Activated CD4-positive, alpha-beta memory T cell treated with anti-CD3 and anti-CD28 coated beads for 36 hours (primary cell): ENCODE measurements at regions of chr20 and their contacts with region 1.

Region 1: GRCh38 chr20:59207742-59208357 is 44.2 kb downstream of the ZNF831 start:
- DNase-seq: peak; percentile 86
- H3K4me3 Mint-ChIP-seq: no peak overlapping the region
- H3K27ac Mint-ChIP-seq: peak overlapping the region; percentile 64
- H3K4me1 Mint-ChIP-seq: peaks cover 22% of the 10 kb centered on the region
- H3K27me3 Mint-ChIP-seq: no peaks in the 10 kb centered on the region

Region 2: GRCh38 chr20:59032023-59032712 is 175.7 kb before region 1 on chr20 and contains the start of gene ATP5F1E:
- CTCF ChIA-PET with region 1: interaction called, 10 read pairs
- POLR2A ChIA-PET with region 1: no interaction called
- intact Hi-C with region 1: no loop called
- DNase-seq: peak; percentile 97
- H3K4me3 Mint-ChIP-seq: peak within 1 kb of the TSS; percentile 94
- H3K27ac Mint-ChIP-seq: peak within 1 kb of the TSS; percentile 94
- H3K4me1 Mint-ChIP-seq: peaks cover 73% of the 10 kb centered on the region
- H3K27me3 Mint-ChIP-seq: no peaks in the 10 kb centered on the region
- total RNA-seq, gene ATP5F1E: 82.2 to 90.4 TPM

Region 3: GRCh38 chr20:59087829-59088433 is 119.9 kb before region 1 on chr20:
- CTCF ChIA-PET with region 1: interaction called, 302 read pairs
- POLR2A ChIA-PET with region 1: interaction called, 6 read pairs
- intact Hi-C with region 1: loop called (anchors 1 kb)
- DNase-seq: peak; percentile 89
- H3K4me3 Mint-ChIP-seq: no peak overlapping the region
- H3K27ac Mint-ChIP-seq: no peak overlapping the region
- H3K4me1 Mint-ChIP-seq: peaks cover 4% of the 10 kb centered on the region
- H3K27me3 Mint-ChIP-seq: no peaks in the 10 kb centered on the region

Region 4: DNA sequence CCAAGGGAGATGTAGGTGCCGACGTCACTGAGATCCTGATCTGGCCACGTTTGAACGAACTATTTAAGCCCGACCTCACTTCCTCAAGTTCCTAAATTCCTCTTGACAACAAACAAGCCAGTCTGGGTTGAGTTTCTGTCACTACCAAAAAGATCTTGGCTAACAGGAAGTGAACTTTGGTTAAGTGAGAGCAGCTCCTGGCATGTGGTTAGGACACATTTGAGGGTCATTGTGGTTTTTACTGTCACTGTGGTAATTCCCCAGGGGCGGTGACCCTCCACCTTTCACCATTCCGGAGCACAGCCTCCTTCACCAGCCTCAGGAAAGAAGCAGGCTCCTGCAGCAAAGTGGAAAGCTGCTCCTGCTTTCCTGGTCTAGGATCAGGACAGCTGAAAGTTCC is 87.4 kb before region 1 on chr20:
- CTCF ChIA-PET with region 1: interaction called, 34 read pairs
- POLR2A ChIA-PET with region 1: interaction called, 6 read pairs
- intact Hi-C with region 1: no loop called
- DNase-seq: peak; percentile 65
- H3K4me3 Mint-ChIP-seq: no peak overlapping the region
- H3K27ac Mint-ChIP-seq: peak overlapping the region; percentile 94
- H3K4me1 Mint-ChIP-seq: peaks cover 71% of the 10 kb centered on the region
- H3K27me3 Mint-ChIP-seq: no peaks in the 10 kb centered on the region

Region 5: DNA sequence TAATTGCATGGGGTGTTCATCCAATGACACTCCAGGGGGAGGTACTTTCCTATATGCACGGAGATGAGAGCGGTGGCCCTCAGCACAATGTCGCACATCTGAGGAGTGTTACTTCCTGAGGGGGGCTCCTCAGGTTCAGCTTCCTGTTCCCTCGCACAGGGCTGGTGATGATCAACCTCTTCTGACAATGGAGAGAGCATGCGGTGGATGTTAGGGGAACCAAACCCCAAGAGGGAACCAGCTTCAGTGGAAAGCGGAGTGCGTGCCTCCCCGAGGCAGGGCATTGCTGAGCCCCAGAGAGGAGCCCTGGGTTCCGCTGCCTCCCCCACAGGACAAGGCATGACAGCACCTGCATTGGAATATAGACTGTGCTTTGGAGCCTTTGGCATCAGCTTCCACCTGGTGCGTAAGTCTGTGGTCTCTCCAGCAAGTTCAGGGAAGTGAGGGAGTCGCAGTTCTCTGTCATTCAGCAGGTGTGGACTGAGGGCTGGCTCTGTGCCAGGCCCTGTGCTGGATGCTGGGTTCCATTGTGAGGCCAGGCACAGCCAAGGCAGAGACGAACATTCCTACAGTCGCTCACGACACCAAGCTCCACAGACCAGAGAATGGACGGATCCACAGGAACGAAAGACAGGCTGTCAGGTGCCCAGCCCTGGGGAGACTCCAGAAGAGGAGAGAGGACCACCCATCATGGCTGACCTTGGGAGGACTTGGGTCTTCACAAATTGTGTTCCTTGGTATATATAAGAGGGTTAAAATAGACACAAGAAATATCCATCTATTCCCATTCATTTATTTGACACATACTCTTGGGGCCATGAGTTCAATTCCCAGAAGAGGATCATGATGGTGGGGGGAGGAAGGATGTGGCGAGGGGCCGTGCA is 48.1 kb before region 1 on chr20:
- CTCF ChIA-PET with region 1: interaction called, 33 read pairs
- POLR2A ChIA-PET with region 1: no interaction called
- intact Hi-C with region 1: loop called (anchors 5 kb)
- DNase-seq: peak; percentile 80
- H3K4me3 Mint-ChIP-seq: peak overlapping the region; percentile 83
- H3K27ac Mint-ChIP-seq: peak overlapping the region; percentile 96
- H3K4me1 Mint-ChIP-seq: peaks cover 87% of the 10 kb centered on the region
- H3K27me3 Mint-ChIP-seq: no peaks in the 10 kb centered on the region

Region 6: DNA sequence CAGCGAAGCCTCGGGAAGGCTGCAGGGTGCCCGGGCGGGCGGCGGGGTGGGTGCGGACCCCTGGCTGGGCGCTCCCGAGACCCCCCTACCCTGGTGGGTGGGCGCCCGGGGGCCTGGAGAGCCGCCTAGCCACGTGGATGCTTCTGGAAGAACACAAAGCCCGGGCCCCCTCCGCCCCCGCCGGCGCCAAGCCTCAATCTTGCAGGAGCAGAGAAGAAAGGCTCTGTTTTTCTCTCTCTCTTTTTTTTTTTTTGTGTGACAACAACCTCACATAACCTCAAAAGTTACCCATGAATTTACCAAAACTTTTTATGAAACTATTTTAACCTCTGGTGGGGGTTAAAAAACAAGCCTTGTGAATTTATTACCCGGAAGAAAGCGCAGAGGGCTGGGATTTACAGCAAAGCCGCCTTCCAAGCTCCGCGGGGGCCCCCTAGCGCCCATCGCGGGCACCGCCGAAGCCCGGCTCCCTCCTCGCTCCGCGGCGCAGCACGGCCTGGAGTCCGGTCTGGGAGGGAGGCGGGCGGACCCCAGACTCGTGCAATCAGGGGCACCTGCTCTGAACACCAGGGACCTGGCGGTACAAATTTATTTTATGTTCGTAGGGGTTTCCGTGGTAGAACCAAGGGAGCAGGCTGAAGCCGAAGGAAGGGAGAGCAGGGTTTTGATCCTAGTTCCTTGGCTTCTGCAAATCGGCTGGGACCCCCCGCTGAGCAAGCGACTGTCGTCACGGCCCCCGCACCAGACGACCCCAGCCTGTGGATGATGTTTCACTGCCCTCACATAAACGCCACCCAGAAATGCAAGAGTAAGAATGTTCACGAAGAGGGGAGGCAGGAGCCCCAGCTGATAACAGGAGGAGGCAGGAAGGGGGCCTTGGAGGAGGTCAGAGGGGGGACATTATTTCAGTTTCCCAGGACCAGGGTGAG is 14.7 kb after region 1 on chr20:
- CTCF ChIA-PET with region 1: interaction called, 28 read pairs
- POLR2A ChIA-PET with region 1: interaction called, 3 read pairs
- intact Hi-C with region 1: no loop called
- DNase-seq: peak; percentile 86
- H3K4me3 Mint-ChIP-seq: peak overlapping the region; percentile 68
- H3K27ac Mint-ChIP-seq: no peak overlapping the region
- H3K4me1 Mint-ChIP-seq: peaks cover 26% of the 10 kb centered on the region
- H3K27me3 Mint-ChIP-seq: no peaks in the 10 kb centered on the region